Cardiac septum (tissue), 1 donor: ENCODE measurements at regions of chr20 and their contacts with region 1.

Region 1: GRCh38 chr20:34768096-34768495 is 57.4 kb downstream of the NCOA6 start:
- DNase-seq: no peak

Region 2: DNA sequence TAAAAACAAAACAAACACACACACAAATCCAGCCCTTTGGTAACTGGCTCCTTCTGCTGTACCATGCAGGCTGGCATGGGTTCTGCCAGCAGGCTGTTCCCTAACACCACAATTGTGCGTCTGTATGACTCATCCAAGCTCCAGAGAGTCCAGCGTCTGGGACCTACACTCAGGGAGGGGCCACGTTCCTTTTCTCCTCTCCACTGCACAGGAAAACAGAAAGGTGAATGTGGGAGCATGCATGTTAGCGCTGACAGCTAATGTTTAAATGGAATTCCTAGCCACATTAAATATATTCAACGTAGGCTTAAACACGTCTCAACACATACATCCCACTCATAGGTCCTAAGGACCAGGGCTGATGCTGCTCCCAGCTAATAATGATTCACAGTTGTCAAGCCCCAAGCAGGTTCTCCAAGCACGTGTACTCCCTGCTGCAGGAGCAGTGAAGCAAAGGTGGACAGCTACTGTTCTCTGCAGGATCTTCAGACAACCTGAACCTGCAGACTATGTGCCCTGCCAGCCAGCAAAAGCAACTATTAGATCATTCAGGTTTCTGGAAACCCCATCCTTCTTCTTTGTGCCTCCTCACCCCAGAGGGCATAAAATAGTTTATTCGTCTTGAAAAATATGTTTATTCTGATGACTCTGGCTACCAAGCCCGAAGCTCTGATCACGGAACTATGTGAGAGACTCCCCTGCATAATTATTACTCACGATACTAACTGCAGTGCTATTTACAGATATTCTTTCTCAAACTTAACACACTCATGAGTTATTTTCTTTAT is 188.7 kb before region 1 on chr20:
- intact Hi-C with region 1: loop called (anchors 2 kb)
- DNase-seq: no peak

Region 3: GRCh38 chr20:34753706-34754461 is 14.2 kb before region 1 on chr20:
- intact Hi-C with region 1: no loop called
- DNase-seq: no peak